ENCODE measurements at regions of chr7 and their contacts with region 1.

Region 1: DNA sequence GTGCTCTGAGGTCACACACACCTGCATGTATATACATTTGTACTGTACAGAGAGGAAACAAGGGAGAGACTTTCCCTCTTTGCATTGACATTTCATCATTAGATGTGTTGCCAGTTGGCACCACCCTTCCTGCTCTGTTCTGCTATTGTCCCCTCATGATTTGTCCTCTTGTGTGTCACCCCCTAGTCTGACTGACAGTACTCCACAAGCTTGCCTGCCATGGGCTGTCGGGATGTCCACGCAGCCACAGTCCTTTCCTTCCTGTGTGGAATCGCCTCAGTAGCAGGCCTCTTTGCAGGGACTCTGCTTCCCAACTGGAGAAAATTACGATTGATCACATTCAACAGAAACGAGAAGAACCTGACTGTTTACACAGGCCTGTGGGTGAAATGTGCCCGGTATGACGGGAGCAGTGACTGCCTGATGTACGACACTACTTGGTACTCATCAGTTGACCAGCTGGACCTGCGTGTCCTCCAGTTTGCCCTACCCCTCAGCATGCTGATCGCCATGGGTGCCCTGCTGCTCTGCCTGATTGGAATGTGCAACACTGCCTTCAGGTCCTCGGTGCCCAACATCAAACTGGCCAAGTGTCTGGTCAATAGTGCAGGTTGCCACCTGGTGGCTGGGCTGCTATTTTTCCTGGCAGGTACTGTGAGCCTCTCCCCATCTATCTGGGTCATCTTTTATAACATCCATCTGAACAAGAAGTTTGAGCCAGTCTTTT is 9.4 kb downstream of the CLDN12 start:
- DNase-seq: no peak
- CTCF ChIP-seq: peak; percentile 31

Region 2: DNA sequence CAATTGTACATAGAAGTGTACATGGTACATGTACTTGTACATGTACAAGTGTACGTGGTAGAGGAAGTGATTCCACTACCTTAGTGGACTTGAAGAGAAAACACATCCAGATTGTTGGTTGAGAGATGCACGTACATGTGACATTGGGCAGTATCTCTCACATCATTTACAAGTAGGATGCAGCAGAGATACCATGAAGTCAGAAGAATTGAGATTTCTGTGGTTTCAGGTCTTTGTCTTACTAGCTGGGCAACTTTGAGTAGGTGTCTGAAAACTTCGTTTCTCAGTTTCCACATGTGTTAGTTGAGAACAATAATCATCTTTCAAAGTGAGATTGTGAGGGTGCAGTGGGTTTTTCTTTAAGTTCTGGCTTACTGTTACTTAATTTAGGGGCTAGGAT is 12.1 kb after region 1 on chr7:
- CTCF ChIA-PET with region 1: interaction called, 43 read pairs
- POLR2A ChIA-PET with region 1: no interaction called
- DNase-seq: peak; percentile 36
- CTCF ChIP-seq: no peak

Region 3: GRCh38 chr7:90430614-90431471 is 18.2 kb after region 1 on chr7:
- CTCF ChIA-PET with region 1: interaction called, 43 read pairs
- POLR2A ChIA-PET with region 1: no interaction called
- DNase-seq: no peak
- CTCF ChIP-seq: no peak

Measured in GM10248 (cell line).